ENCODE measurements at regions of chr1 and their contacts with region 1.

Region 1: DNA sequence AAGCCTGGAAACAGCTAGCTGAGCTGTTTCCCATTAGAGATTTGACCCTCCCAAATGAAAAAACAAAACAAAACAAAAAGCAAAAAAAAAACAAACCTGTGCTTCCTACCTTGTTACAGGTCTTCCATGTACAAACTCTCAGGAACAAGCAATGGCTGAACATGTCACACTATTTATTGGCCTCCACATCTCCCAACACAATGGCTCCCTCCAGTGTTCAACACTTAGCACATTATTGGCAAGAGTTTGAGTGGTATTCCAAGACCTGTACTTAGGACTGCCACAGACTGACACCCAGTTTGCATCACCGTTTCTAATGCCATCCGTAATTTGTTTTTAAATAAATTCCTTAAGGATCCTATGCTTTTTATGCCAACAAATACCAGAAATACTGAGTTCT is 195.0 kb upstream of the OLFM3 start:
- DNase-seq: peak; percentile 43
- H3K4me3 ChIP-seq: no peak overlapping the region
- H3K27ac ChIP-seq: no peak overlapping the region
- H3K4me1 ChIP-seq: no peaks in the 10 kb centered on the region
- H3K27me3 ChIP-seq: no peaks in the 10 kb centered on the region
- CTCF ChIP-seq: peak; percentile 15 to 25
- POLR2A ChIP-seq: no peak

Region 2: DNA sequence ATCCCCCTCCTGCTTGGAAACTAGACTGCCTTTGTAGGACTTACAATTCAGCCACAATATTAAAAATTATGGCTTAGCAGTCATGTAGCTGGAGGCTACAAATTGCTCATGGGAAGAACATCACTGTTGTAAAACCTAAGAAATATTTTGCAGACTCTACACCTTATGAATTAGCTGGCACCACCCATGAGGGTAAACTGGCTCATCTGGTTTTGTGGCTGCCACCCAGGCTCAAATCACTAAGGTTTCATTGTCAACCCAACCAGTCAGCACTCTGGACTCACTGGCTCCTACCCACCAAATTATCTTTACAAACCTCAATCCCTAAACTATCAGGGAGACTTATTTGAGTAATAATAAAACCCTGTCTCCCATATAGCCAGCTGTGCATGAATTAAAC is 94.3 kb before region 1 on chr1:
- CTCF ChIA-PET with region 1: no interaction called
- POLR2A ChIA-PET with region 1: no interaction called
- dilution Hi-C with region 1: no loop called
- intact Hi-C with region 1: no loop called
- DNase-seq: no peak
- H3K4me3 ChIP-seq: no peak overlapping the region
- H3K27ac ChIP-seq: no peak overlapping the region
- H3K4me1 ChIP-seq: no peaks in the 10 kb centered on the region
- H3K27me3 ChIP-seq: no peaks in the 10 kb centered on the region
- CTCF ChIP-seq: no peak
- POLR2A ChIP-seq: no peak

Region 3: DNA sequence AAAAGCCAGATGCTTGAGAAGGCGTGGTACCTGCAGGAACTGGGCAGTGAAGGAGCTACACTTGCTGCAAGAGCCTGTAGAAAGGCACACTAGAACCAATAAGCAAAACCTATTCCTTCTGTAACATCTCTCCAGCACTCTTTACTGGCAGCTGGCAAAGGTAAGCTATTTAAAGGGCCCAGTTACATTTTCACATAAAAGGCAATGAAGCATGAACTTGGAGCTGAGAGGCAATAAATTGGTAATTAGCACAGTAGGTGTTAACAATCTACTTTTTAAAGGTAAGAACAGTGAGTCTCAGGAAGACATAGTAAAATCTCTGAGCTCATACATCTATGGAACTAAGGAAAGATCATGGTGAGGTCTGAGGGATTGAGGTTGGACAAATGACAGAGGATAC is 27.9 kb before region 1 on chr1:
- CTCF ChIA-PET with region 1: no interaction called
- POLR2A ChIA-PET with region 1: no interaction called
- dilution Hi-C with region 1: no loop called
- intact Hi-C with region 1: loop called (anchors 5 kb)
- DNase-seq: no peak
- H3K4me3 ChIP-seq: no peak overlapping the region
- H3K27ac ChIP-seq: no peak overlapping the region
- H3K4me1 ChIP-seq: no peaks in the 10 kb centered on the region
- H3K27me3 ChIP-seq: no peaks in the 10 kb centered on the region
- CTCF ChIP-seq: no peak
- POLR2A ChIP-seq: no peak

Region 4: DNA sequence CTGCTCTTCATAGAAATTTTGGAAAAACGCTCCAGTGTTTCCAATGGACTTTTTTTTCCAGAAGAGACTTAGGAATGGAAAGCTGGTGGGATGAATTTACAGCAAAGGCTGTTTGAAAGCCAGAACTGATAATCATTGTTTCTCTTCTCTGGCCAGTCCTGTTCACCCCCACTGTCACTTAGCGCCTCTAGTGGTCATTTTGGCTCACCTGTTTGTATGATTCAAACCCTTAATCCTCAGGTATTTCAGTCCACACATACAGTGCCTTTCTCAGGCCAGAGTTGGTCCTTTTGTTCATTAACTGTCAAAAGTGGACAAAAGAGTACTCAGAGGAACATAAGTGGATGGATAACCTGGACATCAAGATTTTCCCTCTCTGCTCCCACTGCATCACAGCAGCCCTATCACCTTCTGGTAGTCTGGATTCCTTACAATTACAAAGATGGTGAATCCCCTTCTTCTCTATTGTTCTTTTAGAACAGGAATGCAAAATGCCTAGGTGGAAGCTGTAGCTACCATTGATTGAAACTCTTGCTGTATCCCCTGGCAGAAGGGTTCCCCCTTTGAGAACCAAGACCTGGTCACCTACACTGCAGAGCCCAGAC is 17.4 kb before region 1 on chr1:
- CTCF ChIA-PET with region 1: no interaction called
- POLR2A ChIA-PET with region 1: no interaction called
- dilution Hi-C with region 1: no loop called
- intact Hi-C with region 1: no loop called
- DNase-seq: no peak
- H3K4me3 ChIP-seq: no peak overlapping the region
- H3K27ac ChIP-seq: no peak overlapping the region
- H3K4me1 ChIP-seq: no peaks in the 10 kb centered on the region
- H3K27me3 ChIP-seq: no peaks in the 10 kb centered on the region
- CTCF ChIP-seq: peak in 1 of 2 donors; percentile 51
- POLR2A ChIP-seq: no peak

Region 5: DNA sequence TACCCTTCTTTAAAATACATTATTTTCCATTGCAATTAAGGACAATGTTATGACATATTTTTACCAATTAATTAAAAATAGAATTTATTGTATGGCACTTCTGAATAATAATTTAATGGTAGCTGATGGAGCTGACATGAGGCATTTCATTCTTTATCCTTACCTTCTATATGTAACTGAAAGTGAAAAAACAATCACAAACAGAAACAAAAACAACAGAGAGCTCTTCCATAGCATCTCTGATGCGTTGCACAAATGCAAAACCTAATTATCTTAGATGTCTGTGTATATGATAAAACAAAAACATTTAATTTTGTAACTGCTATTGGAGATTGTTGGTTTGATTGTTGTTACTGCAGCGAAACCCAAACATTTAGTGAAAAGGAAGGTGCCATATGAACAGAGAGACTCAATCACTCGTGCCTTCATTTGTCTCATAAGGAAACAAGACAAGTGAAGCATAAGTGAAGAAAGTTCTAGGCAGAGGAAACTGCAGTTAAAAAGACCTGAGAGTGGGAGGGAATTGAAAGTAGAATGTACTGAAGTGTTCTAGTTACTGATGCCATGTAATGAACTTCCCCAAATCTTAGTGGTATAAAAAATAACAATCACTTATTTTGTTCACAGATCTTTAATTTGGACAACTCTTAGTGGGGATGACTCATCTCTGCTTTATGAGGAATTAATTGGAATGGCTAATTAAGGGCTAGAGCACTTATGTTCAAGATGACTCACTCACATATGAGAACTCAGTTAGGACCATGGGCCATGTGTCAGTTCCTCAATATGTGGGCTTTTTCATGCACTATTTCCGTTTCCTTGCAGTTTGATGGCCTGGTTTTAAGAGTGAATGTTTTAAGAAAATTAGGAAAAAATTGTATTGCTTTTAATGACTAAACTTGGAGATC is 50.0 kb after region 1 on chr1:
- CTCF ChIA-PET with region 1: no interaction called
- POLR2A ChIA-PET with region 1: no interaction called
- dilution Hi-C with region 1: no loop called
- intact Hi-C with region 1: no loop called
- DNase-seq: no peak
- H3K4me3 ChIP-seq: no peak overlapping the region
- H3K27ac ChIP-seq: no peak overlapping the region
- H3K4me1 ChIP-seq: no peaks in the 10 kb centered on the region
- H3K27me3 ChIP-seq: no peaks in the 10 kb centered on the region
- CTCF ChIP-seq: no peak
- POLR2A ChIP-seq: no peak

Region 6: DNA sequence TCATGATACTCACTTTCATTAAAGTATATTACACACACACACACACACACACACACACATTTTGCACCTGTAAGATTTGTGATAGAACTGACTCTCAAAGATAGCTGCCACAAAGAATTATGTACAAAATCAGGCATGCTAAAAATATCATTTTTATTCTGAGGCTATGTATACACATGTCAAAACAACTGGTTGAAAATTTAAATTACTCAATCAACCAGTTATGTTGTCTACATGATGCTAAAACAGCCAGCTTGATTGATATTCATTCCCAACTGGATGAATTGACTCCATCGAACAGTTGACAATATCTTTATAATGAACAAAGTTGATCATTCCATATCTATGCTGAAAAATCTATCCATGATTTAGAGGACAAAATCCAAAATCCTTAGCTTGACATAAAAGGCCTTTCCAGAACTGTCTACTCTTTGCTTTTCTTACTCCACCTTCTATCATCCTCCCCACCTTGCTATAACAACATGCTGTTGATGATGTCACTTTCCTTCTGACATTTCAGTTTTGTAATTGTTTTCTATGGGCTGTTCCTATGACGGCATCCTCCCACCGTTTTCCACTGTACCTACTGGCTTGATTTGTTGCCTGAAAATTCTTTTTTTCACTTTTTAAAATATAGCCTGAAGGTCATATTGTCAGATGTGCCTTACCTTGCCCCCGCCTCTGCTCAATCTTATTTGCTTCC is 126.5 kb after region 1 on chr1:
- CTCF ChIA-PET with region 1: no interaction called
- POLR2A ChIA-PET with region 1: no interaction called
- dilution Hi-C with region 1: no loop called
- intact Hi-C with region 1: no loop called
- DNase-seq: no peak
- H3K4me3 ChIP-seq: no peak overlapping the region
- H3K27ac ChIP-seq: no peak overlapping the region
- H3K4me1 ChIP-seq: no peaks in the 10 kb centered on the region
- H3K27me3 ChIP-seq: no peaks in the 10 kb centered on the region
- CTCF ChIP-seq: no peak
- POLR2A ChIP-seq: no peak